ENCODE measurements at regions of chr9 and their contacts with region 1.

Region 1: GRCh38 chr9:78035383-78035993 is 3.9 kb upstream of the GNAQ start:
- DNase-seq: peak; percentile 74
- H3K4me3 ChIP-seq: no peak overlapping the region
- H3K27ac ChIP-seq: no peak overlapping the region
- H3K4me1 ChIP-seq: no peaks in the 10 kb centered on the region
- H3K27me3 ChIP-seq: no peaks in the 10 kb centered on the region
- CTCF ChIP-seq: peak; percentile 72 to 93 (median 81)
- POLR2A ChIP-seq: no peak

Region 2: GRCh38 chr9:77433675-77434445 is 601.6 kb before region 1 on chr9:
- intact Hi-C with region 1: loop called (anchors 5 kb)
- DNase-seq: peak; percentile 58
- H3K4me3 ChIP-seq: no peak overlapping the region
- H3K27ac ChIP-seq: no peak overlapping the region
- H3K4me1 ChIP-seq: no peaks in the 10 kb centered on the region
- H3K27me3 ChIP-seq: no peaks in the 10 kb centered on the region
- CTCF ChIP-seq: peak; percentile 68 to 93 (median 80)
- POLR2A ChIP-seq: no peak

Region 3: GRCh38 chr9:77673941-77674791 is 361.3 kb before region 1 on chr9:
- intact Hi-C with region 1: loop called (anchors 5 kb)
- DNase-seq: no peak
- H3K4me3 ChIP-seq: no peak overlapping the region
- H3K27ac ChIP-seq: peak overlapping the region in 1 of 2 donors; percentile 21
- H3K4me1 ChIP-seq: no peaks in the 10 kb centered on the region
- H3K27me3 ChIP-seq: no peaks in the 10 kb centered on the region
- CTCF ChIP-seq: no peak
- POLR2A ChIP-seq: no peak

Region 4: GRCh38 chr9:77764894-77765780 is 270.4 kb before region 1 on chr9:
- intact Hi-C with region 1: loop called (anchors 5 kb)
- DNase-seq: no peak
- H3K4me3 ChIP-seq: no peak overlapping the region
- H3K27ac ChIP-seq: no peak overlapping the region
- H3K4me1 ChIP-seq: no peaks in the 10 kb centered on the region
- H3K27me3 ChIP-seq: no peaks in the 10 kb centered on the region
- CTCF ChIP-seq: peak in 3 of 4 experiments; percentile 12 to 51 (median 25)
- POLR2A ChIP-seq: no peak

Region 5: GRCh38 chr9:77944556-77945243 is 90.8 kb before region 1 on chr9:
- intact Hi-C with region 1: loop called (anchors 5 kb)
- DNase-seq: peak; percentile 12
- H3K4me3 ChIP-seq: no peak overlapping the region
- H3K27ac ChIP-seq: peak overlapping the region in 1 of 2 donors; percentile 8
- H3K4me1 ChIP-seq: peaks cover 7% of the 10 kb centered on the region
- H3K27me3 ChIP-seq: no peaks in the 10 kb centered on the region
- CTCF ChIP-seq: peak in 1 of 4 experiments; percentile 12
- POLR2A ChIP-seq: no peak

Region 6: GRCh38 chr9:78097541-78097940 is 62.1 kb after region 1 on chr9:
- intact Hi-C with region 1: no loop called
- DNase-seq: no peak
- H3K4me3 ChIP-seq: no peak overlapping the region
- H3K27ac ChIP-seq: no peak overlapping the region
- H3K4me1 ChIP-seq: no peaks in the 10 kb centered on the region
- H3K27me3 ChIP-seq: no peaks in the 10 kb centered on the region
- CTCF ChIP-seq: no peak
- POLR2A ChIP-seq: no peak

Region 7: GRCh38 chr9:78397454-78397853 is 362.0 kb after region 1 on chr9:
- intact Hi-C with region 1: no loop called
- DNase-seq: no peak
- H3K4me3 ChIP-seq: no peak overlapping the region
- H3K27ac ChIP-seq: no peak overlapping the region
- H3K4me1 ChIP-seq: no peaks in the 10 kb centered on the region
- H3K27me3 ChIP-seq: no peaks in the 10 kb centered on the region
- CTCF ChIP-seq: no peak
- POLR2A ChIP-seq: no peak

Measured in prostate gland (tissue), 2 donors.